ENCODE measurements at regions of chr9 and their contacts with region 1.

Region 1: GRCh38 chr9:125374443-125375309 is 113.0 kb downstream of the GAPVD1 start:
- DNase-seq: peak; percentile 54 to 82
- ATAC-seq: peak; percentile 81 to 92 (median 86)
- H3K4me3 ChIP-seq: peak overlapping the region; percentile 52
- H3K27ac ChIP-seq: no peak overlapping the region
- H3K4me1 ChIP-seq: peaks cover 3% of the 10 kb centered on the region
- H3K27me3 ChIP-seq: no peaks in the 10 kb centered on the region
- CTCF ChIP-seq: peak; percentile 78

Region 2: GRCh38 chr9:125255781-125256391 is 118.8 kb before region 1 on chr9:
- intact Hi-C with region 1: loop called (anchors 2 to 5 kb)
- DNase-seq: no peak
- ATAC-seq: peak in 3 of 4 donors; percentile 64 to 80 (median 68)
- H3K4me3 ChIP-seq: no peak overlapping the region
- H3K27ac ChIP-seq: no peak overlapping the region
- H3K4me1 ChIP-seq: no peaks in the 10 kb centered on the region
- H3K27me3 ChIP-seq: no peaks in the 10 kb centered on the region
- CTCF ChIP-seq: peak; percentile 38

Region 3: DNA sequence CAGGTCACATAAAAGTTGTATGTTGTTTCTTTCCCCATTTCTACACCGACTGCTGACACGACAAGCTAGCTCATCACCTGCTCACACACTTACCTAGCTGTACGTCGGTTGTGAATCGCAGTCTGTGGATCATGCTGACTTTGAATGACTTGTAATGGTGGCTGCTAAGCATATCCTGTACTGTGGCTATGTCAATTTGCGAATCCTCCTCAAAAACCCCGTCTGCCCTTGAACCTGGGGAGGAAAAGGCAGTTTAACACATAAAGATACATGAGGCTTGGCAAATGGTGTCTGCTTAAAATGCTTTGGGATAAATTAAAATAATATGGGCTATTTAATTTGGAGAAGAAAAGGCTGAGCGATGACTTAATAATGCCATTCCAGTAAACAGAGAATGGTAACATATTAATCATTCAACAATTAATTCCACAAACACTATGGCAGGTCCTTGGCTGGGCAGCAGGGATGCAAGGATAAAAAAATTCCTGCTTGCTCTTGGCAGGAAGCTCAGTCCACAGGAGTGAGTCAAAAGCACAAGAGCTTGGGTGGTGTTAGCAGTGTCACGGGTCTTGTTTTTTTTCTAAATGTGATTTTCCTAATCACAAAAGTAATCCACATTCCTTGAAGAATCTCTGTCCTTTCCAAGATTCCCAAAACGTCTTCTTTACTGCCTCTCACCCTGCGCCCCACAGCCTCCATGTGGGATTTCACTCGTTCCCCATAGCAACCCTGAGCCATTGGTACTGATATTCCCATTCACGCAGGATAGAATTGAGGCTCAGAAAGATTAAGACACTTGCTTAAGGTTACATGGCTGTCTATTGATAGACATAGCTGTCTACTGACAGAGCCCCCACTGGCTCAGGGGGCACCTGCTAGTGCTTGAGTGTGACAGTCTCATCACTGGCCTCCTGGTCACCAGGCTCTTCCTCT is 109.9 kb after region 1 on chr9:
- intact Hi-C with region 1: no loop called
- DNase-seq: peak in 1 of 2 donors; percentile 25
- ATAC-seq: peak in 1 of 4 donors; percentile 31
- H3K4me3 ChIP-seq: no peak overlapping the region
- H3K27ac ChIP-seq: no peak overlapping the region
- H3K4me1 ChIP-seq: peaks cover 5% of the 10 kb centered on the region
- H3K27me3 ChIP-seq: no peaks in the 10 kb centered on the region
- CTCF ChIP-seq: no peak

Measured in psoas muscle (tissue), 8 donors.